ENCODE measurements at regions of chr2 and their contacts with region 1.

Region 1: GRCh38 chr2:203782262-203782976 is 76.0 kb downstream of the CD28 start:
- DNase-seq: peak; percentile 94
- H3K4me3 ChIP-seq: no peak overlapping the region
- H3K27ac ChIP-seq: peak overlapping the region; percentile 83
- H3K4me1 ChIP-seq: peaks cover 10% of the 10 kb centered on the region
- H3K27me3 ChIP-seq: no peaks in the 10 kb centered on the region
- CTCF ChIP-seq: peak; percentile 88 to 96

Region 2: GRCh38 chr2:203484266-203485112 is 297.9 kb before region 1 on chr2:
- CTCF ChIA-PET with region 1: no interaction called
- dilution Hi-C with region 1: no loop called
- in situ Hi-C with region 1: no loop called
- intact Hi-C with region 1: loop called (anchors 1 kb)
- DNase-seq: peak; percentile 29
- H3K4me3 ChIP-seq: no peak overlapping the region
- H3K27ac ChIP-seq: no peak overlapping the region
- H3K4me1 ChIP-seq: no peaks in the 10 kb centered on the region
- H3K27me3 ChIP-seq: no peaks in the 10 kb centered on the region
- CTCF ChIP-seq: peak; percentile 59 to 71

Region 3: DNA sequence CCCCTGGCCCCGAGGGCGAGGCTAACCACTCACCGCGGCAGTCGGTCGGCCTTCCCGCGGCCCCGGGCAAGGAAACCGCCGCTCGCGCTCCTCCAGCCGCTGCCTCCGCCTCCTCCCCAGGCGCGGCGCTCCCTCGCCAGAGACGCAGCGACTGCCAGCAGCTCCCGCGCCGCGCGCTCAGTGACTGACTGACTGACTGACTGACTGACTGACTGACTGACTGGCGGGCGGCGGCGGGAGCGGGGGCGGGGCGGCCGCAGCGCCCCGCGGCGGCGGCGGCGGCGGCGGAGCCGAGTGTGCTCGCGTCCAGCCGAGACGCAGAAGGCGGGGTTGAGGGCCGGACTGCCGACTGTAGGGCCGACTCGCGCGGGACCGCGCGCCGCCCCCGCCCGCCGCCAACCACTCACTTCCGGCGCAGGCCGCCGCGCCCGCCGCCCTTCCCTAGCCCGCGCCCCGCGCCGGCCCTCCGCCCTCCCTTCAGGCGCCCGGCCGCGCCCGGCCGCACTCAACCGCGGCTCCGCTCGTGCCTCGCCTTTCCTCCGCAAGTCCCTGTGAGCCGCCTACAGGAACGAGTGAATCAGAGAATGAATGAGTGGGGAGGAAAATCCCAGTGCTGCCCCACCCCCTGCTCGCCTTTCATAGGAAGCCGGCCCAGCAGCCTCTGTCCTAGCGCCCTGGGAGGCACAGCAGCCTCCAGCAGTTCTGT is 247.2 kb before region 1 on chr2 and contains the start of gene RAPH1:
- CTCF ChIA-PET with region 1: no interaction called
- dilution Hi-C with region 1: no loop called
- in situ Hi-C with region 1: no loop called
- intact Hi-C with region 1: loop called (anchors 1 kb)
- DNase-seq: peak; percentile 94
- H3K4me3 ChIP-seq: peak within 1 kb of the TSS; percentile 89 to 96 (median 95)
- H3K27ac ChIP-seq: peak within 1 kb of the TSS; percentile 85
- H3K4me1 ChIP-seq: peaks cover 26% of the 10 kb centered on the region
- H3K27me3 ChIP-seq: no peaks in the 10 kb centered on the region
- CTCF ChIP-seq: no peak
- total RNA-seq, gene RAPH1: 12.5 to 42.2 TPM

Region 4: DNA sequence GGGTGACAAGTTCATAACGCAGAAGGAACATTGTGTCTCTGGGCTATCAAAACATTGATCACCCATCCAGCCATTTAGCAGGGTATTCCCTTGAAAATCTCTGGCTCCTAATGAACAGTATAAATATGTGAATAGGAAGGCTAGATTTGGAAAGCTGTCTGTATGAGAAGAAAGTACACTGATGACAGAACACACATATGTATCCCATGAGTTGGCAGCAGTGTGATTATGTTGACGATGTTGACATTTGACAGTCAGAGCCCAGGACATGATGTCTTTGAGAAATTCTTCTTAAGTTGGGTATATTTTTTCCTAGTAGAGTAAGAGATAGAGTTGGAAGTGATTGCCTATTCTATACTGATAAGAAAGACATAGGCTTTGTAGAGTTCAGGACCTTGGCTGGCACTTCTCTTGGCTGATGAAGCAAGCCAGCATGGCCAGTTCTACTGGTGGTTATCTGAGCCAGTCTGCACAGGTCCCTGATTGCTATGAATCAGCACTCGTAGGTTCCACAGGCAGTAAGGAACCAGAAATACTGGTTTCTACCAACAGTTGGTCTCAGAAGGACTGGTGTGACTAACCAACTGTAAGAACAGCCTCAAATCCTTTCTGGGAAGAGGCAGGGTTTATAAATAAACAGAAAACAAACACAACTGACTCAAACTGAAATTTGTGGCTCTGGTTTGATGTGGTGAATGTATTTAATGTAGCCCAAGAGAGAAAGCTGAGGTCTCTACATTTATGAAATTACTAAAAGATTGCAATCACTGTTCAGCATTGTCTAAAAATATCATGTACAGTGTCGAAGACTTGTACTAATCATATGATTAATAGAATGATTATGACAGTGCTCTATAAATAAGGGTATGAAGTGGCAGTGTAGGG is 203.4 kb before region 1 on chr2:
- CTCF ChIA-PET with region 1: no interaction called
- dilution Hi-C with region 1: no loop called
- in situ Hi-C with region 1: no loop called
- intact Hi-C with region 1: loop called (anchors 5 kb)
- DNase-seq: peak; percentile 99
- H3K4me3 ChIP-seq: no peak overlapping the region
- H3K27ac ChIP-seq: peak overlapping the region; percentile 65
- H3K4me1 ChIP-seq: peaks cover 32% of the 10 kb centered on the region
- H3K27me3 ChIP-seq: no peaks in the 10 kb centered on the region
- CTCF ChIP-seq: no peak

Region 5: GRCh38 chr2:203656522-203657287 is 125.7 kb before region 1 on chr2:
- CTCF ChIA-PET with region 1: no interaction called
- dilution Hi-C with region 1: no loop called
- in situ Hi-C with region 1: no loop called
- intact Hi-C with region 1: loop called (anchors 1 kb)
- DNase-seq: peak; percentile 90
- H3K4me3 ChIP-seq: no peak overlapping the region
- H3K27ac ChIP-seq: peak overlapping the region; percentile 60
- H3K4me1 ChIP-seq: peaks cover 22% of the 10 kb centered on the region
- H3K27me3 ChIP-seq: no peaks in the 10 kb centered on the region
- CTCF ChIP-seq: no peak

Region 6: DNA sequence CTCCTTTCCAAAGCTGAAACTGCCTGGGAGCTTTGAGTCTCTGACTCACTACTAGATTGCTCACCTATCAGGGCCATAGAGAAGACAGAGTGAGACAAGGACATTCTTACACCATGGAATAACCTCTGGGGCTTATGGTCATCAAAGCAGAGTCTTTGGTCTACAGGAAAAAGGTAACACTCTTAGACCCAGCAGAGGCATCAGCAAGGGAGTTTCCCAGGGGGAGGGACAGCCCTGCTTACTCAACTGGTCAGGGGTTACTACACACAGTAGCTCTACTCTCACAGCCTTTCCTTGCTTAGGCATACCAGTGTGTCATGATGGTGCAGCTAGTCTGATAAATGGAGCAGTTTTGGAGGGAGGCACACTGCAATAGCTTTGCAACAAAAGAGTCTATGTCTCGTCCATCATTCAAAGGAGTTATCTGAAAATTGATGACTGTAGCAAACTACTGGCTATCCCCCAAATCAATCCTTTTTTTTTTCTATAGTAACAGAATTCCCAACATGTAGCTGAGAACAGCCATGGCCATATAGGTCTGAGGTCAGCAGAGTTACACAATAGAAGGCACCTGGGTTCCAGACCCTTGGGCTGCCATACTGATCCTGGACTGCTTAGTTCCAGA is 98.4 kb before region 1 on chr2:
- CTCF ChIA-PET with region 1: no interaction called
- dilution Hi-C with region 1: no loop called
- in situ Hi-C with region 1: loop called in 1 of 2 experiments (anchors 10 kb)
- intact Hi-C with region 1: loop called (anchors 1 kb)
- DNase-seq: peak; percentile 99
- H3K4me3 ChIP-seq: no peak overlapping the region
- H3K27ac ChIP-seq: peak overlapping the region; percentile 97
- H3K4me1 ChIP-seq: peaks cover 72% of the 10 kb centered on the region
- H3K27me3 ChIP-seq: no peaks in the 10 kb centered on the region
- CTCF ChIP-seq: no peak

Region 7: GRCh38 chr2:203730076-203730729 is 52.2 kb before region 1 on chr2:
- CTCF ChIA-PET with region 1: no interaction called
- dilution Hi-C with region 1: no loop called
- in situ Hi-C with region 1: no loop called
- intact Hi-C with region 1: loop called (anchors 2 kb)
- DNase-seq: peak; percentile 26
- H3K4me3 ChIP-seq: no peak overlapping the region
- H3K27ac ChIP-seq: peak overlapping the region; percentile 56
- H3K4me1 ChIP-seq: peaks cover 15% of the 10 kb centered on the region
- H3K27me3 ChIP-seq: no peaks in the 10 kb centered on the region
- CTCF ChIP-seq: no peak

Region 8: GRCh38 chr2:203858176-203858575 is 75.8 kb after region 1 on chr2:
- CTCF ChIA-PET with region 1: no interaction called
- dilution Hi-C with region 1: no loop called
- in situ Hi-C with region 1: no loop called
- intact Hi-C with region 1: no loop called
- DNase-seq: no peak
- H3K4me3 ChIP-seq: no peak overlapping the region
- H3K27ac ChIP-seq: no peak overlapping the region
- H3K4me1 ChIP-seq: no peaks in the 10 kb centered on the region
- H3K27me3 ChIP-seq: no peaks in the 10 kb centered on the region
- CTCF ChIP-seq: no peak

Region 9: GRCh38 chr2:204024503-204024902 is 242.1 kb after region 1 on chr2:
- CTCF ChIA-PET with region 1: no interaction called
- dilution Hi-C with region 1: no loop called
- in situ Hi-C with region 1: no loop called
- intact Hi-C with region 1: no loop called
- DNase-seq: peak; percentile 46
- H3K4me3 ChIP-seq: no peak overlapping the region
- H3K27ac ChIP-seq: no peak overlapping the region
- H3K4me1 ChIP-seq: peaks cover 15% of the 10 kb centered on the region
- H3K27me3 ChIP-seq: no peaks in the 10 kb centered on the region
- CTCF ChIP-seq: peak; percentile 64 to 86